ENCODE measurements at regions of chr20 and their contacts with region 1.

Region 1: DNA sequence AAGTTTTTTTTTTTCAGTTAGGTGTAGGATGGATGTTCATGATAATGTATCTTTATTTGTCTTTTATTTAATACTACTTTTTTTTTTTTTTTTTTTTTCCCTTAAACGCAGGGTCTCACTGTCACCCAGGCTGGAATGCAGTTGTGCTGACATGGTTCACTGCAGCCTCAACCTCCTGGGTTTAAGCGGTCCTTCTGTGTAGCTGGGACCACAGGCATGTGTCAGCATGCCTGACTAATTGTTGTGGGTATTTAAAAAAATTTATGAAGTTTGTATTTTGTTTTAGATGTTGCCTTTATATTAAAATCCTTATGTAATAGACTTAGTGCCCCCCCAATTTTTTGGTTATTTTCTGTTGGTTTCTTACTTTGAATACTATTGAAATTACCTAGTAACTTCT is 42.6 kb downstream of the NCOA3 start:
- DNase-seq: no peak
- CTCF ChIP-seq: no peak

Region 2: DNA sequence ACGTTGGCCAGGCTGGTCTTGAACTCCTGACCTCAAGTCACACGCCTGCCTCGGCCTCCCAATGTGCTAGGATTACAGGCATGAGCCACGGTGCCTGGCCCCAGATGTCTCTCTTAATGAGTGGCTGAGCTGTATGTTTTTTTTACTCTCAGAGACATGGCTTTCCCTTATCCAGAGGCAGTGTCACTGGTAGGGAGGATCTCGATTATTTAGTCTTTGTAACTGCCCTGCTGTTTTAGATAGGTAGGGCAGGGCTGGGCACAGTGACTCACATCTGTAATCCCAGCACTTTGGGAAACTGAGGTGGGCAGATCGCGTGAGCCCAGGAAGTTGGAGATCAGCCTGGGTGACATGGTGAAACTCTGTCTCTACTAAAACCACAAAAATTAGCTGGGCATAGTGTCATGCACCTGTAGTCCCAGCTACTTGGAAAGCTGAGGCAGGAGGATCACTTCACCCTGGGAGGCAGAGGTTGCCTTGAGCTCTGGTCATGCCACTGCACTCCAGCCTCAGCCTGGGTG is 21.0 kb after region 1 on chr20:
- CTCF ChIA-PET with region 1: interaction called, 10 read pairs
- POLR2A ChIA-PET with region 1: no interaction called
- DNase-seq: no peak
- CTCF ChIP-seq: no peak

Measured in GM10248 (cell line).